ENCODE measurements at regions of chr10 and their contacts with region 1.

Region 1: DNA sequence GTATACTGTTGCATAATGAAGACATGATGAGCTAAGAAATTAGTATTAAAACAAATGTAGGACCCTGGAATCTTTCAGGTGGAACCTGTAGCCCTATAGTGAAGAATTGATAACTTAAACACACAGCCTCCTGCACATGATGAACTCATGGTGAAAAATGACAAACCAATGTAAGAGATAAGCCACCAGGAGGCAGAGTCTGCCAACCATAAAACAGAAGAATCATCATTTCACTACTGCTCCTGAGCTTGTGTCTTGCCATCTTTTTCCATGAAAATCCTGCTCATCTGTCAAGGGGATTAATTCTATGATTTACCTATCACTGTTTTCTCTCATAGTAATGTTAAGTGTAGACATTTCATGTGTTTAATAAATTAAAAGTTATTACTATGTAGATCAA is 363.9 kb downstream of the MALRD1 start:
- DNase-seq: no peak
- ATAC-seq: no peak
- H3K4me3 ChIP-seq: no peak overlapping the region
- H3K4me3 Mint-ChIP-seq: no peak overlapping the region
- H3K27ac ChIP-seq: no peak overlapping the region
- H3K27ac Mint-ChIP-seq: no peak overlapping the region
- H3K4me1 ChIP-seq: no peaks in the 10 kb centered on the region
- H3K4me1 Mint-ChIP-seq: no peaks in the 10 kb centered on the region
- H3K27me3 ChIP-seq: no peaks in the 10 kb centered on the region
- H3K27me3 Mint-ChIP-seq: peaks cover 0 to 6% of the 10 kb centered on the region in 2 donors
- CTCF ChIP-seq: no peak

Region 2: DNA sequence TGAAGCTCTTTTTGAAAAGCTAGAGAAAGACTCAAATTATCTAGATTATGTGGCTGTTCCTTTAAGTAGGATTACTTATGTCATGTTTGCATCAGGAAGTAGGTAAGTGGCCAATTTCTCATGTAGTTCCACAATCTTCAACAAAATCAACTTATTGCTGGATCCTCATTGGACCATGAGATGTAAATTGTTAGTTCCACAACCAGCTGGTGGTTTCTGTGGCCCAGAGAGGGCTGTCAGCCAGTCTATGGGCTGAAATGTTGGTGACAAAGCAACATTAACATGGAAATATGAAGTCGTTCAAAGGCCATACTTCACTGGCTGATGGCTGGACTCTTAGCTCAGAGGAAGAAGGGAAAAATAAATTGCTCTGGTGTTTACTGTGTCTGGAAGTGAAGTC is 561.6 kb after region 1 on chr10:
- intact Hi-C with region 1: loop called (anchors 5 kb)
- DNase-seq: no peak
- ATAC-seq: peak in 2 of 3 donors; percentile 52 to 57
- H3K4me3 ChIP-seq: no peak overlapping the region
- H3K4me3 Mint-ChIP-seq: no peak overlapping the region
- H3K27ac ChIP-seq: no peak overlapping the region
- H3K27ac Mint-ChIP-seq: no peak overlapping the region
- H3K4me1 ChIP-seq: no peaks in the 10 kb centered on the region
- H3K4me1 Mint-ChIP-seq: peaks cover 12 to 13% of the 10 kb centered on the region in 2 donors
- H3K27me3 ChIP-seq: no peaks in the 10 kb centered on the region
- H3K27me3 Mint-ChIP-seq: no peaks in the 10 kb centered on the region
- CTCF ChIP-seq: no peak

Region 3: DNA sequence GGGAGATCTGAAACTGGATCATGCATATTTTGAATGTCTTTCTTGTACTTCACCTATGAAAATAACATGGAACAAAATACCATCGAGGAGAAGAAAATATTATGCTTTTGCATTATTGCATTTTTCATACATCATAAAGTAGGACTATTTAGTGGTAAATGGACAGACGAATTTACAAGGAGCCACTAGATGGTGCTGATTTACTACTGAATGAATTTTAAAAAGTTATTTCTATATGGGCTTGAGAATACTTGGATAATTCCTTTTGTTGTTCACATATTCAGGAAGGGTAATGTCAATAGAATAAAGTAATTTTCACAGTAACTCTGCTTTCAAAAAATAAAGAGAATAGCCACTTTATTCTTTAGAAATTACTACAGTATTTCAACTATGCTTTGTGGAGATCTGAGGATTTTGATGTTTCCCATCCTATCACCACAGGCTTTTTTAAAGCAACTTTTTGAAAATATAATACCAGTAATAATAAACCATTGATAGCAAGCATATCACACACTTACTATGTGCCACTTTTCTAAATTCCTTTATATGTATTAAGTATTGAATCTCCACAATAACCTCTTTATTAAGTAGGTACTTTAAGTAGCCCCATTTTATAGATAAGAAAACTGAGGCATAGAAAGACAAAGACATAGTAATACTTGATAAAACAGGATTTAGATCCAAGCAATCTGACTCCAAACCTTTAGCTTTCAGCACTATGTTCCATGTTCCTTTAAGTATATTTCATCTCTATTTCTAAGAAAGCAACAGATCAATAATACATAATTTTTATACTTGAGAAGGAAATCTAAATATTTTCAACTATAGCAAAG is 1446.0 kb after region 1 on chr10:
- intact Hi-C with region 1: loop called (anchors 5 kb)
- DNase-seq: peak in 1 of 2 donors; percentile 15
- ATAC-seq: no peak
- H3K4me3 ChIP-seq: no peak overlapping the region
- H3K4me3 Mint-ChIP-seq: no peak overlapping the region
- H3K27ac ChIP-seq: no peak overlapping the region
- H3K27ac Mint-ChIP-seq: no peak overlapping the region
- H3K4me1 ChIP-seq: no peaks in the 10 kb centered on the region
- H3K4me1 Mint-ChIP-seq: no peaks in the 10 kb centered on the region
- H3K27me3 ChIP-seq: no peaks in the 10 kb centered on the region
- H3K27me3 Mint-ChIP-seq: peaks cover 9 to 15% of the 10 kb centered on the region in 2 donors
- CTCF ChIP-seq: no peak

Measured in natural killer cell (primary cell).